Vagina (tissue), 2 donors: ENCODE measurements at regions of chr3 and their contacts with region 1.

Region 1: DNA sequence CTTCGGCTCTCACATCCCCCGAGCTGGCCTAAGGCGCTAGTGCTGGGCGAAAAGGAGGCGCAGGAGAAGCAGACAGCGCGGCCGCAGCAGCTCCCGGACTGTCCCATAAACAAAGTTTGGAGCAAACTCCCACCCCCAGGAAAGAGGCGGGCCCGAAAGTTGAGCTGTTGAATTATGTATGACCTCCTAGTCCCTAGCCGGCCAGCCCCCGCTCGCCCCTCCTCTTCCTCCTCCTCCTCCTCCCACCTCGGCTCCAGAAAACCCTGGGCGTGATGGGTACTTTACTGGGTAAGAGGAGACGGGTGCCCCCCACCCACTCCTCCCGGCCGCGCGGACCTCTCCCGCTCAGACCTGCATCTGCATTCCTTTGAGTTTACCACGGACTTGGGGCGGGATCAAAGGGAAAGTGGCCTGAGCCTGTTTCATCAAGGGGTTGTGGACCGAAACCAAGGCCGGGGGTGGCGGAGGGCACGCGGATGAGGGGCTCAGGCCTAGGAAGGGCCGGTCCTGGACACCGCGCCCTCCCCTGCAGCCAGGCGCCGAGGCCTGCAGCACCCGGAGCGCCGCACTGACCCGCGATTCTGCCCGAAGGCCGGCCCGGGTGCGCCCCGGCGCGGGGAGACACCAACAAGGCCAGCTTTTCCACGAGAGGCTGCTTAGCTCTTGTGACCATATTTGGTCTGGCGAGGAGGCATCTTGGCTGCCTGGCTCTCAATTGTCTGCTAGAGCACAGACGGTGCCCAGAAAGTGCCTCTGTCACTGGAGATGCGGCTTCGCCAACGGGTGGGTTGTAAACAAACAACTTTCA is at the start of gene WWTR1:
- DNase-seq: peak in 1 of 2 donors; percentile 97
- H3K4me3 ChIP-seq: peak within 1 kb of the TSS; percentile 86 to 92
- H3K27ac ChIP-seq: peak within 1 kb of the TSS; percentile 99
- H3K4me1 ChIP-seq: peaks cover 43% of the 10 kb centered on the region
- H3K27me3 ChIP-seq: no peaks in the 10 kb centered on the region
- CTCF ChIP-seq: peak in 1 of 3 experiments; percentile 19
- POLR2A ChIP-seq: peak; percentile 88 to 93
- total RNA-seq, gene WWTR1: 181 TPM

Region 2: DNA sequence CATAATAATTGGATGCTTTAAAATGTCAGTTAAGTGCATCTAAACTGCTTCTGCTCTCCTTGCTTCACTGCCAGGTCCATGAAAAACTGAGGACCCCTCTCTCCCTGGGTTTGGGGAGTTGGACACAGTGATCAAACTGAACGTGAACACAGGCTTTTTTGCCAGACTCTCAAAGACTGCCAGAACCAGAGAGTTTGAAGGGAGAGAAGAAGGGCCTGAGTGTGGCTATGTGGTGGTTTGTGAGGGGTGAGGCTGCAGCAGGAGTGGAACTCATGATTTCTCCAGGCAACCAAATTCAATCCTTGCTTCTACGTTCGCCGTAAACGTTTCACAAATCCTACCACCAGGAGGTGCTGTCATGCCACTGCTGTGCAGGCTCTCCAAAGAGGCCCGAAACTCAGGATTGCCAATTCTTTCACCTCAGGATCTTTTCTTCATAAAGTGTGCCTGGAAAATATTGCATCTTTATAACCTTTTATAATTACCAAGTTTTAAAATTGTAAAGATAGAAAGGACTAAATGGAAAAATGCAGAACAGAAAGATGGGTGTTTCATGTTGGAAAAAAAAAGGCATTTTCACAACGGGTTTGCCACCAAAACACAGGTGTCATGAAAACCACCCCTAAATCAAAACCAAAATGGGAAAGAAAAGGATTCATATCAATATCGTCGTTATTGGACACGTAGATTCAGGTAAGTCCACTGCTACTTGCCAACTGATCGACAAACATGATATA is 163.9 kb before region 1 on chr3:
- intact Hi-C with region 1: no loop called
- DNase-seq: peak in 1 of 2 donors; percentile 74
- H3K4me3 ChIP-seq: no peak overlapping the region
- H3K27ac ChIP-seq: no peak overlapping the region
- H3K4me1 ChIP-seq: no peaks in the 10 kb centered on the region
- H3K27me3 ChIP-seq: no peaks in the 10 kb centered on the region
- CTCF ChIP-seq: peak; percentile 28 to 79 (median 63)
- POLR2A ChIP-seq: no peak

Region 3: DNA sequence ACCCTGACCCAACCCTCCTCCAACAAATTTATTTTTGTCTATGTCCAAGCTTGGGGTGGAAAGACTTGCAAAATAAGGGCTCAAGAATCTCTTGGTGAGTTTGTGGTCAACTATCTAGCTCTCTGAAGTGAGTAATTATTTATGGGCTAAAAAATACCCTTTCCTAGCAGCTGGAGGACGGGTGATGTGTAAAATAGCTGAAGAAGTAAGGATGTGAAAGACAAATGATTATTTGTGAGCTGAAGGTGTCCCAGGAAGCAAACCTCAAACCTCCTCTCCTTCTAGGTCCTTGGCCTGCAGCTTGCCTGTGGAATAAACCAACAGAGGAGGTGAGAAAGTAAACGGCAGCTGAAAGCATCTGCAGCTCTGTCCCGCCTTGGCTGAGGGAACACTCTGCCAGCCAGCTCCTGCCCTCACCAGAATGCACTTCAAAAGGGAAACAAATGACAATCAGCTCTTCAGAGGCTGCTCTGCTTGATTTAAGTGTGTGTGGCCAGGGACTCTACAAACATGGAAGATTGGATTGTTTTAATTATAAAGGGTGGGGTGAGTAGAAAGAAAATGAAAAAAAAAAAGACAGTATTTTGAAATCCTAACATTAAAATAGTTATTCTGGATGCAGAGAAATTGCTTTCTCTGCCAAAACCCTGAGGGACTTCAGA is 123.3 kb before region 1 on chr3:
- intact Hi-C with region 1: loop called (anchors 5 kb)
- DNase-seq: no peak
- H3K4me3 ChIP-seq: peak overlapping the region; percentile 5 to 10
- H3K27ac ChIP-seq: peak overlapping the region; percentile 65
- H3K4me1 ChIP-seq: peaks cover 55% of the 10 kb centered on the region
- H3K27me3 ChIP-seq: no peaks in the 10 kb centered on the region
- CTCF ChIP-seq: no peak
- POLR2A ChIP-seq: no peak

Region 4: GRCh38 chr3:149553781-149554451 is 104.2 kb before region 1 on chr3:
- intact Hi-C with region 1: no loop called
- DNase-seq: peak in 1 of 2 donors; percentile 91
- H3K4me3 ChIP-seq: no peak overlapping the region
- H3K27ac ChIP-seq: peak overlapping the region; percentile 31
- H3K4me1 ChIP-seq: peaks cover 47% of the 10 kb centered on the region
- H3K27me3 ChIP-seq: no peaks in the 10 kb centered on the region
- CTCF ChIP-seq: no peak
- POLR2A ChIP-seq: no peak

Region 5: DNA sequence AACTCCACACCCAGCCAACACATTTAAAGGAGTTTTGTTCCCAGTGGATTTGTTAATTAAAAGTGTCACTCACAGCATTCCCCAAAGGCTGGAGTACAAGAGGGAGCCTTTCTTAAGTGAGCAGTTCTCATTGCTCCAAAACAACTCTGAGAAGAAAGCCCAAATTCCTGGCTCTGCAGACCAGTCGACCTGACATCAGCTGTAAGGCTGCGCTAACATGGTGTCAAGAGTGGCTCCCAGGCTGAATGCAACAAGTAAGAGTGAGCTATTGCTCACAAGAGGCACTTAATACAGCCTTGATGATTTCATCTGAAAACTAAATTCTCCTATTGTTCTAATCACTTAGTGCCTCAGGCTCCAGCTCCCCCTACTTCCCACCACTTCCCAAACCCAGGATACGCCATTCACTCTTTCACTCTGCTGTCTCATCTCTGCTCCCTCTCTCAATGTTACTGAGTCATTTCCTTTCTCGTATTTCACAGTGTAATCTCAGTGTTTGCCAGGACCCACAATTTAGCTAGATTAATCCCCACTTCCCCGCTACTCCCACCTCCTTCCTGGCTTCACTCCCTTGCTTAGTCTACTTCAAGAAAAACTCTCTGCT is 82.1 kb before region 1 on chr3:
- intact Hi-C with region 1: loop called (anchors 5 kb)
- DNase-seq: no peak
- H3K4me3 ChIP-seq: no peak overlapping the region
- H3K27ac ChIP-seq: peak overlapping the region; percentile 70
- H3K4me1 ChIP-seq: peaks cover 91% of the 10 kb centered on the region
- H3K27me3 ChIP-seq: no peaks in the 10 kb centered on the region
- CTCF ChIP-seq: no peak
- POLR2A ChIP-seq: no peak

Region 6: DNA sequence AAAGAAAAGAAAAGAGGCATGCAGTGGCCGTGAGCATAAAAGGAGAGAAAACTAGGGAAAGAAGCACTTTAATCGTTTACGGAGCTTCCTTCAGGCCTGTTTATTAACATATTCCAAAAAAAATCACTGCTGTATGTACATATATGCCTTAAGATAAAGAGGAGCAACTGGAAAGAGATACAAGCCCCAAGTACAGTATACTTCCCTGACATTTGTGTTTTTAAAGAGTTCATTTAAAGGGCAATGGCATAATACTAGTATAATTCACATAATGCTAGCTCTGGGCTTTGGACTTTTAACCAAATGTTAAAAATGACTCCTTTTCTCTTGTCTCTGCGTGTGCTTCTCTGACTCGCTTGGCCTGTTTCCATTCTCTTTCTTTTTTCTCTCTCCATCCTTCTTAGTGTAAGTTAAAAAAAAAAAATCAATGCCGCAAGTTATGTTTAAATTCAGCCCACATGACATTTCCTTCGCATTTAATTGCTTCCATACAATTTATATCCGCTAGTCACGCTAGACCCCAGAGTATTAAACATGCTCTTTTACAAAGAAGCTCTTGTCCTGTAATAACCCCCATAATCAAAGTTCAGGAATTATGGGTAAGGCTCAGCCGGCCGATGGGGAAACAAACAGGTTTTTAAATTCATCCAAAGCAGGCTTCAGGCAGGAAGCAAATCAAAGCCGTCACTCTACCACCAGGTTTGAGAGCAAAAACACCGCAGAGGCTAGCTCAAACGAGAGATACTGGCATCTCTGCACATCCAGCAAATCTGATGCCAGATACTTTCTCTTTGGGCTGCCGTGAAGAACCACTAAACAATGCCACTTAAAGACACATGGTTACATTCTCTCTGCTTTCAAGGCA is 19.7 kb before region 1 on chr3:
- intact Hi-C with region 1: no loop called
- DNase-seq: no peak
- H3K4me3 ChIP-seq: peak overlapping the region; percentile 16 to 20
- H3K27ac ChIP-seq: peak overlapping the region; percentile 54
- H3K4me1 ChIP-seq: peaks cover 82% of the 10 kb centered on the region
- H3K27me3 ChIP-seq: no peaks in the 10 kb centered on the region
- CTCF ChIP-seq: no peak
- POLR2A ChIP-seq: no peak